ENCODE measurements at regions of chr11 and their contacts with region 1.

Region 1: GRCh38 chr11:99534812-99535211 is 514.1 kb downstream of the CNTN5 start:
- ATAC-seq: no peak
- H3K4me3 ChIP-seq: no peak overlapping the region
- H3K27ac ChIP-seq: no peak overlapping the region
- H3K4me1 ChIP-seq: peaks cover 2 to 18% of the 10 kb centered on the region in 2 donors

Region 2: GRCh38 chr11:99188221-99188620 is 346.6 kb before region 1 on chr11:
- in situ Hi-C with region 1: no loop called
- ATAC-seq: no peak
- H3K4me3 ChIP-seq: no peak overlapping the region
- H3K27ac ChIP-seq: no peak overlapping the region
- H3K4me1 ChIP-seq: no peaks in the 10 kb centered on the region

Region 3: DNA sequence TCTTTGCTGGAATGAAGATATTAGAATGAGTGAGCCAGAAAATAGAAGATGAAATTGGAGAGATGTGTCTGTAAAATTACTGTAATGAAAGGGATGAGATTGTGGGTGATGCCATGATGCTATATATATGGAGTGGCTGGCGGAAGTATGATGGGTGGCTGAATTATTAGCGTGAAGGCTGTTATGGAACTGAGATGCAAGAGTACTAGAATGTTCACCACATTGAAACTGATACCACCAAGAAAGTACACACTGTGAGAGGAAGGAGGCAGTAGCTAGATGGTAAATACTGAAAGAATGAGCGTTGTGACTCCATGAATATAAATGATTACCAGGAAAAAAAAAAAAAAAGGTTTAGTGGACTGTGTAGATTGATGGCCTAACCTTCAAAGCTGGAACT is 102.1 kb before region 1 on chr11:
- in situ Hi-C with region 1: loop called in 1 of 9 experiments (anchors 25 kb)
- ATAC-seq: no peak
- H3K4me3 ChIP-seq: no peak overlapping the region
- H3K27ac ChIP-seq: no peak overlapping the region
- H3K4me1 ChIP-seq: no peaks in the 10 kb centered on the region

Region 4: DNA sequence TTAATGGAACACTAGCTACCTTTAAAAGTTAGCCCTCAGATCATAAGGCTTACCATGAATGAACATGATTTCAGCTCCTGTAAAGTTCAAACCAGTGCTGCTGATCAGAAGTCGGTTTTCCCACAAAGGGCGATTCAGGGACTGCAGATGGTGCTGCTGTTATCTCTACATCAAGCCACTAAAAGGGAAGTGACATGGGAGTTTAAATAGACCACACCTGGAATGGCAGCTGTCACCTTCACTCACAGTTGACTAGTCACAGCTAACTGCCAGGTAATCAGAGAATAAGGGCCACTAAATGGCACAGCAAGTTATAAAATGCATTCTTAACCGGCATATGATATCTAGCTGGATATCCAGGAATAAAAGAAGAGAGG is 571.2 kb after region 1 on chr11:
- in situ Hi-C with region 1: no loop called
- ATAC-seq: no peak
- H3K4me3 ChIP-seq: no peak overlapping the region
- H3K27ac ChIP-seq: no peak overlapping the region
- H3K4me1 ChIP-seq: no peaks in the 10 kb centered on the region